WTC11 (cell line): ENCODE measurements at regions of chr7 and their contacts with region 1.

Region 1: DNA sequence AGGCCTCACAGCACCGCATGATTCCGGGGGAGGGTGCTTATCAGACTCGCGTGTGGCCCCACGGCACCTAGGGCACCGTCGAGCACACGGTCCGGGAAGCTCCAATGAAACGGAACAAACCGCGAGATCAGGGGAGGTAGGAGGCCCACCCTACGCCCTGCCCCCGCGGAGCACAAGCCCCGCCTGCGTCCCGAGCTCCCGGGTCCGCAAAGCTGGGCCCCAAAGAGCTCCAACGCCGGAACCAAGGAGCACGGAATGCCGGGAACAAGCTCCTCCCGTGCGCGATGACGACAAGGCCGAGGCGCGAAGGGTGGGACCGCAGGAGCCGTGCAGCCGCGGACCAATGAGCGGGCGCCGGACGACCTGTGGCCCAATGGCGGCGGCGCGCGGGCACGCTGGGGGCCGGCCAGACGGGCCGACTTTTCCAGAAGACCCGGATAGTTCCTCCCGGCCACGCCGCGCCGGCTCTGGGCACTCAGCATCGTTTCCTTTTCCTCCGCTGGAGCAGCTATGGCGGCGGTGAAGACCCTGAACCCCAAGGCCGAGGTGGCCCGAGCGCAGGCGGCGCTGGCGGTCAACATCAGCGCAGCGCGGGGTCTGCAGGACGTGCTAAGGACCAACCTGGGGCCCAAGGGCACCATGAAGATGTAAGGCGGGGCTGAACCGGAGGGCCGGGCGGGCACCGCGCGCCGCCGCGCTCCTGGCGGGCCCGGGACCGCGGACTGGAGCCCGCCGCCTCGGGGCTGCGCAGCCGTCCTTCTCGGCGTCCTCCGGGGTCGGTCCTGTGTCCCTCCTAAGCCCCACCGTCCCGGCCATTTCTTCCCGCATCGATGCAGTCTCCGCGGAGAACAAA is at the starts of genes CCT6A and PSPH:
- DNase-seq: peak; percentile 98
- ATAC-seq: peak; percentile 97
- H3K4me3 Mint-ChIP-seq: peak within 1 kb of the TSS; percentile 96
- H3K27ac Mint-ChIP-seq: peak within 1 kb of the TSS; percentile 99
- H3K4me1 Mint-ChIP-seq: peaks cover 17% of the 10 kb centered on the region
- H3K27me3 Mint-ChIP-seq: no peaks in the 10 kb centered on the region
- CTCF ChIP-seq: no peak
- total RNA-seq, gene CCT6A: 208 to 246 TPM (median 209 TPM) in 3 replicates
- total RNA-seq, gene PSPH: 43.7 to 49.3 TPM (median 49.2 TPM) in 3 replicates

Region 2: DNA sequence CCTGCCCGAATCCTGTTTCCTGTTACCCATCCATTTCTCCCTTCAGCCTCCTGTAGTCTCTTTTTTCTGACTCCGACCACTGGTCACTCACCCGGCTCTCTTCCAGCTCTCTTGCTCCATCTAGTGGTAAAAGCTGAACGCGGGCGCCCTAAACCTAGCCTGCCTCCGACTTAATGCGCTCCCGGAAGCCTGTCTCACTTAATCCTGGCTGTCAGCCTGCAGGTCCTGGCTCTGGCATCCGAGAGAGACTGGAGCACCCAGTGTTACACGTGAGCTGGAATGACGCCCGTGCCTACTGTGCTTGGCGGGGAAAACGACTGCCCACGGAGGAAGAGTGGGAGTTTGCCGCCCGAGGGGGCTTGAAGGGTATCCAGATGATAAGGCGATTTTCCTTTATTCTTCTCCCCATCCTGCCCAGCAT is 22.8 kb after region 1 on chr7:
- CTCF ChIA-PET with region 1: interaction called, 18 read pairs
- POLR2A ChIA-PET with region 1: interaction called, 13 read pairs
- DNase-seq: peak; percentile 86
- ATAC-seq: peak; percentile 94
- H3K4me3 Mint-ChIP-seq: no peak overlapping the region
- H3K27ac Mint-ChIP-seq: peak overlapping the region; percentile 98
- H3K4me1 Mint-ChIP-seq: peaks cover 3% of the 10 kb centered on the region
- H3K27me3 Mint-ChIP-seq: no peaks in the 10 kb centered on the region
- CTCF ChIP-seq: peak; percentile 85